CD4-positive, alpha-beta memory T cell (primary cell): ENCODE measurements at regions of chr1 and their contacts with region 1.

Region 1: DNA sequence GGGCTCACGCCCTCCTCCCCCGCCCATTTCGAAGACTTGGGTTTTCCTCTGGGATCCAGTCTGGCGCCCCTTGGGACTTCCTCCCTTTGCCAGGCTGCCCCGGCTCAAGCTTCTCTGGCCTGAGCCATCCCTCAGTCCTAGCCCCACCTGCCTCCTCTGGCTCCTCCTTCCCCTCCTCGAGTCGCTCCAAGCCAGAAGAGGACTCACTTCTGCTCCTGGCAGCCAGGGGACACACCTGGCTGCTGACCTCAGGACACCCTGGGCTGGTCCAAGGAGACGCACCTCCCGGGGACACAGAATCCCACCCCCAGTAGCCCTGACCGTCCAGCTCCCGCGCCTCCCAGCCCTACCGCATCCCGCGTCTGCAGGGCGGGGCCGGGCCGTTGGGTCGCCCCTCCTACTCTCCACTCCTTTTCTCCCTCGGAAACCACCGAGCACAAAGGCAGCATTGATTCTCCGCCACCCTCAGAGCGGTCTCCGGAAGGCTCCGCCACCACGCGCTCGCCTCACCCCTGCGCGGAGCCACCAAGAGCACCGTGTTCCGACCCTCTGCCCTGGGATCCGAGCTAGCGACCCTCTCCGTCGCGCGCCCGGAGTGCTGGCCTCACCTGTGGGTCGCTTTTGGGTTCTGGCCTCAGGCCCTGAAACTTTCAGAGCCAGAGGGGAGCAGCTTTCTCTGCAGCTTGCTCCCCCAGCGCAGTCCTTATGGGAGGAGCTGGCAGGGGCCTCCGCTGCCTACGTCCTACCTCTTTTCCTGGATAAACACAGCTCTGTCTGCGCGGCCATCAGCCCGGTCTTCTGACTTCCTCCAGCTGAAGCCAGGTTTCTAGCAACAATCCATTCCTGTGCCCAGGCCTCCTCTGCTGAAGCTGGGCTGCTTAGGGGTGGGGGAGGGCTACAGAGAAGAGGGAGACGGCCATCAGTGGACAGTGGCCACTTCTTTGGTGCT is at the start of gene C2CD4D:
- DNase-seq: peak; percentile 75 to 87 (median 79)
- H3K4me3 ChIP-seq: peak within 1 kb of the TSS; percentile 52 to 83
- H3K4me3 Mint-ChIP-seq: peak within 1 kb of the TSS; percentile 84 to 93 (median 88)
- H3K27ac ChIP-seq: peak within 1 kb of the TSS; percentile 75
- H3K27ac Mint-ChIP-seq: peak within 1 kb of the TSS; percentile 82 to 98 (median 94)
- H3K4me1 ChIP-seq: peaks cover 54% of the 10 kb centered on the region
- H3K4me1 Mint-ChIP-seq: peaks cover 27 to 66% (median 52%) of the 10 kb centered on the region in 4 donors
- H3K27me3 ChIP-seq: no peaks in the 10 kb centered on the region
- H3K27me3 Mint-ChIP-seq: no peaks in the 10 kb centered on the region
- total RNA-seq, gene C2CD4D: 1.0 to 1.7 TPM

Region 2: GRCh38 chr1:151443846-151444782 is 395.6 kb before region 1 on chr1:
- CTCF ChIA-PET with region 1: interaction called, 8 read pairs
- POLR2A ChIA-PET with region 1: interaction called, 4 read pairs
- intact Hi-C with region 1: loop called (anchors 1 kb)
- DNase-seq: peak; percentile 68 to 82 (median 68)
- H3K4me3 ChIP-seq: no peak overlapping the region
- H3K4me3 Mint-ChIP-seq: no peak overlapping the region
- H3K27ac ChIP-seq: no peak overlapping the region
- H3K27ac Mint-ChIP-seq: peak overlapping the region in 3 of 7 donors; percentile 41 to 79 (median 69)
- H3K4me1 ChIP-seq: peaks cover 50% of the 10 kb centered on the region
- H3K4me1 Mint-ChIP-seq: peaks cover 32 to 65% (median 50%) of the 10 kb centered on the region in 4 donors
- H3K27me3 ChIP-seq: no peaks in the 10 kb centered on the region
- H3K27me3 Mint-ChIP-seq: no peaks in the 10 kb centered on the region

Region 3: DNA sequence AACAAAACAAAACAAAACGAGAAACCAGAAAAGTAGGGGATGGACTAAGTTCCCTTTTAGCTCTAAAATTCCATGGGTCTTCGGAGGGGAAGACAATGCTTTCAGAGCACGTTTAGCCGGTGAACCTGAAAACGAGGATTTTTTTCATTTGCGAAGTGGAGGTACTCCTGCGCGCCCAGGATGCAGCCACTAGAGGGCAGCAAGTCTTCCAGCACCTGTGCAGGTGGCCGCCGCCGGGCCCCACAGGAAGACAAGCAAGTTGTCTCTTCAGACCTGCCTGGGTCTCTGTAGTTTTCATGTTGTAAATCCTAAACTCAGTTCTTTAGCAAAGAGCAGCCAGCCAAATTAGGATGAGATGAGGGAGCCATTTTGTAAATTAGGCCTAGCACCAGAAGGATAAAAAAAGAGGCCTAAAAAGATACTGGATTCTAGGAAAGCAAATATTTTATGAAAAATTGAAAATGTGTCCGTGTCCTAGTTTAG is 245.5 kb before region 1 on chr1:
- CTCF ChIA-PET with region 1: interaction called, 69 read pairs
- POLR2A ChIA-PET with region 1: interaction called, 5 read pairs
- intact Hi-C with region 1: loop called (anchors 1 kb)
- DNase-seq: peak; percentile 82 to 84 (median 83)
- H3K4me3 ChIP-seq: peak overlapping the region in 1 of 2 donors; percentile 33
- H3K4me3 Mint-ChIP-seq: peak overlapping the region in 7 of 8 donors; percentile 33 to 82 (median 70)
- H3K27ac ChIP-seq: no peak overlapping the region
- H3K27ac Mint-ChIP-seq: peak overlapping the region in 6 of 7 donors; percentile 4 to 49 (median 26)
- H3K4me1 ChIP-seq: peaks cover 5% of the 10 kb centered on the region
- H3K4me1 Mint-ChIP-seq: peaks cover 3 to 12% (median 9%) of the 10 kb centered on the region in 4 donors
- H3K27me3 ChIP-seq: no peaks in the 10 kb centered on the region
- H3K27me3 Mint-ChIP-seq: peaks cover 4 to 8% of the 10 kb centered on the region in 2 donors

Region 4: DNA sequence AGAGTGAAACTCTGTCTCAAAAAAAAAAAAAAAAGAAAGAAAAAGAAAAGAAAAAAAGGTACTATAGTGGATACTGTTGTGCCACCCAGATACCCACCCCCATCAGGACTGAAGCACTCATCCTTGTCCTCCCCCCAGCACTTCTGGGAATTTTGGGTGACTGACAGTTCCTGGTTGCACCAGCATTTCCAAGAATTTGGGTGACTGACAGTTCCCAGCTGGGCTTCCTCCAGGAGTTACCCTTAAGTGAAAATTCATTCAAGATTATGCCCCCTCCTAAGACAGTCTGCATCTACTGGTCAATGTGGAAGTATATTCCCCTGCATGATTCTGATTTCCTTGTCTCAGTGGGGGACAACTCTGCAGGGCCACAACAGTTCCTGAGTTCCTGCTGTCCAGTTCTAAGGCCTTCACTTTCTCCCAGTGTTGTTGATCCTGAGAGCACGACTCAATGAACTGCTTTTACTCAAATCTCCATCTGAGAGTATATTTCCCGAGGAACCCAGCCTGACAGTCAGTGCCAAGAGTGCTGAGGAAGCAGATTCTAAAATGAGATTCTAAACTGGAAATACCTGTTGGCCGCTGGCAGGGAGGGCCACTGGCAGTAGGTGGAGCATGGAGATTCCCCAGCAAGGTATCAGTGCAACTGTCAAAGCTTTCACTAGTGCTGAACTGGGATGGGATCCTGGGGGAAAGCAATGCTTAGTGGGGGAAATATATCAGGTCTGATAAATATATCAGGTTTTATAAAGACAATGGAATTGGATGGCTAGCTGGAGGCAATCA is 99.9 kb before region 1 on chr1:
- CTCF ChIA-PET with region 1: interaction called, 13 read pairs
- POLR2A ChIA-PET with region 1: interaction called, 4 read pairs
- intact Hi-C with region 1: loop called (anchors 5 kb)
- DNase-seq: no peak
- H3K4me3 ChIP-seq: no peak overlapping the region
- H3K4me3 Mint-ChIP-seq: no peak overlapping the region
- H3K27ac ChIP-seq: no peak overlapping the region
- H3K27ac Mint-ChIP-seq: no peak overlapping the region
- H3K4me1 ChIP-seq: no peaks in the 10 kb centered on the region
- H3K4me1 Mint-ChIP-seq: no peaks in the 10 kb centered on the region
- H3K27me3 ChIP-seq: no peaks in the 10 kb centered on the region
- H3K27me3 Mint-ChIP-seq: no peaks in the 10 kb centered on the region

Region 5: DNA sequence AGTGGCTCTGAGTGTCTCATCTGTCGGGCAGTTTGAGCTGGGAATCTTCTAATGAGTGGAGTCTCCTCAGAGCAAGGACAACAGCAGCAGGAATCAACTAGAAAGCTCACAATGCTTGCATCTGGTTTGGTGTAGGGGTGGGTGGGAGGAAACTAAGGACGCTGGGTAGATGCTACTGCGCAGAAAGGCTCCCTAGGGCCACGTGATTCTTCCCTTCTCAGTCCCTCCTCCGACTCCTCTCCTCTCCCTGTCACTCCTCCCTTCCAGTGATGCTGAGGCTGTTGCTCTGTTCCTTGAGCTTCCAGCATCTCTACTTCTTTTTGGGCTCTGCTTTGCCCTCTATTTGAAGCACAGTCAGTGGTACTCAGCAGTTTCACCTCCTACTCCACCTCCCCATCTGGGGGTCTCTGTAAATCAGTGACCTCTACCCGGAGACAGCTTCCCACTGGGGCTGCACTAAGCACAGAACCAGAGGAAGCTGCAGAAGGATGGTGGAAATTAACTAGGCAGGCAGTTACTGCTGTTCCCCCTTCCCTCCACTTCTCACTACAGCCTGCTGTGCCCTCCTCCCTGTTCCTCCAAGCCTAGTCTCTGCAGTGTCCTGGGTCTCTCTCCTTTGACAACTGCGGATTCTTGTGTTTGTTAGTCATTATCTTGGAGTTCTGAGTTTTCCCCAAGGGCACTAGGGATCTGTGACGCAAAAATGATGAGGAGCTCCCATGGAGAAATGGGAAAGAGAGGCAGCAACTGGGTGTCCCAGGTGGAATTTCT is 40.4 kb before region 1 on chr1:
- CTCF ChIA-PET with region 1: interaction called, 10 read pairs
- POLR2A ChIA-PET with region 1: interaction called, 3 read pairs
- intact Hi-C with region 1: no loop called
- DNase-seq: no peak
- H3K4me3 ChIP-seq: no peak overlapping the region
- H3K4me3 Mint-ChIP-seq: no peak overlapping the region
- H3K27ac ChIP-seq: no peak overlapping the region
- H3K27ac Mint-ChIP-seq: peak overlapping the region in 3 of 7 donors; percentile 32 to 59 (median 42)
- H3K4me1 ChIP-seq: peaks cover 20% of the 10 kb centered on the region
- H3K4me1 Mint-ChIP-seq: peaks cover 10 to 16% (median 15%) of the 10 kb centered on the region in 4 donors
- H3K27me3 ChIP-seq: no peaks in the 10 kb centered on the region
- H3K27me3 Mint-ChIP-seq: no peaks in the 10 kb centered on the region

Region 6: GRCh38 chr1:151828965-151829698 is 10.6 kb before region 1 on chr1:
- CTCF ChIA-PET with region 1: interaction called, 13 read pairs
- POLR2A ChIA-PET with region 1: interaction called, 233 read pairs
- intact Hi-C with region 1: no loop called
- DNase-seq: no peak
- H3K4me3 ChIP-seq: no peak overlapping the region
- H3K4me3 Mint-ChIP-seq: peak overlapping the region; percentile 60 to 94 (median 76)
- H3K27ac ChIP-seq: peak overlapping the region; percentile 62
- H3K27ac Mint-ChIP-seq: peak overlapping the region; percentile 88 to 96 (median 93)
- H3K4me1 ChIP-seq: peaks cover 90% of the 10 kb centered on the region
- H3K4me1 Mint-ChIP-seq: peaks cover 55 to 98% (median 75%) of the 10 kb centered on the region in 4 donors
- H3K27me3 ChIP-seq: no peaks in the 10 kb centered on the region
- H3K27me3 Mint-ChIP-seq: no peaks in the 10 kb centered on the region

Region 7: GRCh38 chr1:151924679-151925587 is 85.2 kb after region 1 on chr1:
- CTCF ChIA-PET with region 1: no interaction called
- POLR2A ChIA-PET with region 1: no interaction called
- intact Hi-C with region 1: no loop called
- DNase-seq: peak in 1 of 5 donors; percentile 24
- H3K4me3 ChIP-seq: no peak overlapping the region
- H3K4me3 Mint-ChIP-seq: peak overlapping the region in 6 of 8 donors; percentile 3 to 55 (median 40)
- H3K27ac ChIP-seq: no peak overlapping the region
- H3K27ac Mint-ChIP-seq: peak overlapping the region; percentile 51 to 84 (median 68)
- H3K4me1 ChIP-seq: peaks cover 16% of the 10 kb centered on the region
- H3K4me1 Mint-ChIP-seq: peaks cover 9 to 11% (median 9%) of the 10 kb centered on the region in 4 donors
- H3K27me3 ChIP-seq: no peaks in the 10 kb centered on the region
- H3K27me3 Mint-ChIP-seq: no peaks in the 10 kb centered on the region